Heart right ventricle (tissue), 16 donors: ENCODE measurements at regions of chr13 and their contacts with region 1.

Region 1: DNA sequence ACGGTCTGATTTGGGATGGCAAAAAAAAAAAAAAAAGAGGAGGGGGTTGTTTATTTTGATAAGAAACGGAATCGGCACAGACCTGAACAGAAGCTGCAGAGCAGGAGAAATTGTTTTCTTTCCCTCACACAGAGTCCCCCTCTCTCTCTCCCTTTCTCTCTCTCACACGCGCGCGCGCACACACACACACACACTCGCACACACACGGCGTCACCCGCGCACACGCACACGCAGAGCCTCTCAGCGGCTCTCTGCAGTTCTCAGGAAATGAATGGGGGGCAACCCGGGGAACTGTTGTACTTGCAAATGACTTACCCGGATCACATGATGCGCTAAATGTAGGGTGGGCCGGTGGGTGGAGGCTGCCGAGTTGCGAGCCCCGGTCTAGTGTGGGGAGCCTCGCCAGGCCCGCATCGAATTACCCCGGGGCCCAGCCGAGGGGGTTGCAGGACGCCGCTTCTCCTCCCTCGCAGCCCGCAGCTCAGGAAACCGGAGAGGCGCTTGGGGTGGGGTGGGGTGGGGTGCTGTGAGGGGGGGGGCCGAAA is 475 bp downstream of the KLF12 start:
- DNase-seq: peak; percentile 84 to 89
- ATAC-seq: peak; percentile 64 to 89 (median 73)
- H3K4me3 ChIP-seq: peak overlapping the region; percentile 65 to 98 (median 89)
- H3K27ac ChIP-seq: peak overlapping the region; percentile 93 to 99 (median 97)
- H3K4me1 ChIP-seq: peaks cover 0 to 47% (median 29%) of the 10 kb centered on the region in 9 donors
- H3K27me3 ChIP-seq: peaks cover 0 to 12% (median 0%) of the 10 kb centered on the region in 7 donors
- CTCF ChIP-seq: no peak

Region 2: DNA sequence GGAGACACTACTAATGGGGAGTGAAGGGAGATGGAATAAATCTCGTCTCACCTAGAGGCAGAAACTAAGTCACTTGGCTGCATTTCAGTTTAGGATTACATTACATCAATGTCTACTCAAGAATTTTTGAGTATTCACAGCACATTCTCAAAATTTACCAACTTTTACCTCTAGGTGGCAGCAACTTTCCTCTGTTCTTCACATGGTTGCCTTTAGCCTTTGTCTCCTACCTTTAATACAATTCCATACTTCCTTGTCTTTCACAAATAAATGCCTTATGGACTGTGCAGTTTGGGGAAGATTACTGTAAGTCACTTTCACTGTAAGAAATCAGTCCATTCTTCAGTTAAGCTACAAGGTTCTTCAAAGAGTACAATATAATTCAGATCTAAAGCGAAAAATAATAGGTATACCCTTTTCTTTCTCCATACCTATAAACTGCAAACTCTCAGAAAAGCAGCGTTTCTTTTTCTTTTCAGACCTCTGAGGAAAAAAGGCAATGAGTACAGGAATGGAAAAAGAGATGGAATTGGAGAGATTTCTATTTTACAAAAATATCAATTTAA is 378.9 kb before region 1 on chr13:
- intact Hi-C with region 1: loop called in 2 of 10 experiments (anchors 10 kb)
- DNase-seq: peak in 1 of 2 donors; percentile 51
- ATAC-seq: peak in 5 of 8 donors; percentile 52 to 78 (median 62)
- H3K4me3 ChIP-seq: no peak overlapping the region
- H3K27ac ChIP-seq: no peak overlapping the region
- H3K4me1 ChIP-seq: peaks cover 0 to 10% (median 0%) of the 10 kb centered on the region in 9 donors
- H3K27me3 ChIP-seq: no peaks in the 10 kb centered on the region
- CTCF ChIP-seq: peak; percentile 56 to 84 (median 74)

Region 3: DNA sequence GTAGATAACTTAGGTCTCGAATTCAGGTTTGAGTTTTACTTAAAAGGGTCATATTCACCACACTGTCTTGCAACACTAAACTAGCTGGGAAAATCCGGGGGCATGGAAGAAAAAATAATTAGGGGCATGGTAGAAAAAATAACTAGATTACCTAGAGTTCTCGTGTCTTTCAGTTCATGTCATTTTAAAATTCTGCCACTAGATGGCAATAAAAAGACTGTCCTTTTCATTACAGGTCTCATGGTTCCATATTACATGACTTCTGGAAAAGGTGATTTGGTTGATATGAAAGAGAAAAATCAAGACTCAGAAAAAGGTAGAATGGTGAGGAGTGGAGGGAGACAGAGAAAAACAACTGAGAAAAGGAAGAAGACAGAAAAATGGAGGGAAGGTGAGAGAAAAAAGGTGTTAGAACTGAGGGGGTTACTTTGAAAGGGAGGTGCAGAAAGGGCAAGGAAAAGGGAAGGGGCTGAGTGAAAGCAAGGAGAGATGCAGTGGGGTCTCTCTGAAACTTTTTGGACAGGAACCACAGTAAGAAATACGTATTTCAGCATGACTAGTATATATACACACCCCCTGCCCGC is 298.5 kb before region 1 on chr13:
- intact Hi-C with region 1: loop called in 8 of 10 experiments (anchors 5 to 10 kb)
- DNase-seq: no peak
- ATAC-seq: peak in 5 of 8 donors; percentile 35 to 58 (median 50)
- H3K4me3 ChIP-seq: no peak overlapping the region
- H3K27ac ChIP-seq: no peak overlapping the region
- H3K4me1 ChIP-seq: peaks cover 0 to 30% (median 8%) of the 10 kb centered on the region in 9 donors
- H3K27me3 ChIP-seq: no peaks in the 10 kb centered on the region
- CTCF ChIP-seq: peak; percentile 51 to 83 (median 71)

Region 4: GRCh38 chr13:73943137-73943964 is 190.4 kb before region 1 on chr13:
- intact Hi-C with region 1: loop called in 6 of 10 experiments (anchors 5 to 10 kb)
- DNase-seq: no peak
- ATAC-seq: peak in 1 of 8 donors; percentile 21
- H3K4me3 ChIP-seq: no peak overlapping the region
- H3K27ac ChIP-seq: peak overlapping the region in 6 of 10 donors; percentile 13 to 54 (median 29)
- H3K4me1 ChIP-seq: peaks cover 6 to 55% (median 31%) of the 10 kb centered on the region in 9 donors
- H3K27me3 ChIP-seq: no peaks in the 10 kb centered on the region
- CTCF ChIP-seq: no peak

Region 5: DNA sequence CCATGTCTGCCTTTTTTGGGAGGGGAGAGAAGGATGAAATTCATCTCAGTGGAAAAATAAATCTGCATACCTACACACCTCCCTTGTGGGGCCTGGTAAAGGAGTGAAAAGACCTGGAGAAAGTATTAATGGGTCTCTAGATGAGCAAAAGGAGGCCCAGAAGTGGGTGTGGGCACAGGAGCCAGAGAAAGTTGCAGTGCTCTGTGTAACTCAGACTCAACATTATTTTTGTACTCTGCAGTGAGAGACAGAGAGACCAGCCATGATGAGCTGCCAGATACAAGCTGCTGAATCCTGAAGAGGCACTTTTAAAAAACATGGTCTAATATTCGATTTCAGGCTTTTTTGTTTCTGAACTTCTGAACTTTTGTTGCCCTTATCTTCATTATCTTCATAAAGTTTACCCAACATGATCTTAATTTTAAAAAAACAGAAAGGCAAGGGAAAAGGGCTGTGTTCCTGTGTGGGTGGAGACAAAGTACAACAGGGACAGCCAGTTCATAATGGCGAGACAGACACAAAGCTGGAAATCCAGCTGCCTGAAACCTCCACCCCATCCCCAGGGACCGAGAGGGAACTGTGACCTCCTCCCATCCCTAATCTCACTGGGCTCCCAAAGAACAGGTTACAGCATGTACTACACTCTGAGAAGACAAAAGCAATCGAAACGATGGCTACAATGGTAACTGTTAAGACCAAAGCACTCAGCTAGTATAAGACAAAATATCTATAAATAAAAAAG is 76.8 kb before region 1 on chr13:
- intact Hi-C with region 1: loop called in 4 of 10 experiments (anchors 2 to 5 kb)
- DNase-seq: peak; percentile 59 to 82
- ATAC-seq: peak; percentile 79 to 97 (median 92)
- H3K4me3 ChIP-seq: peak overlapping the region in 2 of 10 donors; percentile 6 to 10
- H3K27ac ChIP-seq: peak overlapping the region; percentile 52 to 88 (median 58)
- H3K4me1 ChIP-seq: peaks cover 7 to 59% (median 46%) of the 10 kb centered on the region in 9 donors
- H3K27me3 ChIP-seq: no peaks in the 10 kb centered on the region
- CTCF ChIP-seq: no peak

Region 6: GRCh38 chr13:74087357-74087756 is 46.4 kb before region 1 on chr13:
- intact Hi-C with region 1: loop called in 1 of 10 experiments (anchors 5 kb)
- DNase-seq: no peak
- ATAC-seq: no peak
- H3K4me3 ChIP-seq: no peak overlapping the region
- H3K27ac ChIP-seq: no peak overlapping the region
- H3K4me1 ChIP-seq: peaks cover 0 to 66% (median 32%) of the 10 kb centered on the region in 9 donors
- H3K27me3 ChIP-seq: no peaks in the 10 kb centered on the region
- CTCF ChIP-seq: no peak

Region 7: GRCh38 chr13:74575729-74576125 is 442.0 kb after region 1 on chr13:
- intact Hi-C with region 1: loop called in 1 of 10 experiments (anchors 10 kb)
- DNase-seq: peak; percentile 88 to 95
- ATAC-seq: peak; percentile 96 to 100 (median 99)
- H3K4me3 ChIP-seq: peak overlapping the region in 9 of 10 donors; percentile 21 to 51 (median 44)
- H3K27ac ChIP-seq: peak overlapping the region; percentile 13 to 86 (median 64)
- H3K4me1 ChIP-seq: peaks cover 0 to 36% (median 23%) of the 10 kb centered on the region in 9 donors
- H3K27me3 ChIP-seq: peaks cover 0 to 18% (median 0%) of the 10 kb centered on the region in 7 donors
- CTCF ChIP-seq: peak in 1 of 9 donors; percentile 8